Breast epithelium (tissue), 4 donors: ENCODE measurements at regions of chr18 and their contacts with region 1.

Region 1: GRCh38 chr18:61388010-61388409 is 54.8 kb downstream of the CDH20 start:
- DNase-seq: no peak
- H3K4me3 ChIP-seq: no peak overlapping the region
- H3K27ac ChIP-seq: no peak overlapping the region
- H3K4me1 ChIP-seq: no peaks in the 10 kb centered on the region
- H3K27me3 ChIP-seq: no peaks in the 10 kb centered on the region
- CTCF ChIP-seq: no peak
- POLR2A ChIP-seq: no peak

Region 2: DNA sequence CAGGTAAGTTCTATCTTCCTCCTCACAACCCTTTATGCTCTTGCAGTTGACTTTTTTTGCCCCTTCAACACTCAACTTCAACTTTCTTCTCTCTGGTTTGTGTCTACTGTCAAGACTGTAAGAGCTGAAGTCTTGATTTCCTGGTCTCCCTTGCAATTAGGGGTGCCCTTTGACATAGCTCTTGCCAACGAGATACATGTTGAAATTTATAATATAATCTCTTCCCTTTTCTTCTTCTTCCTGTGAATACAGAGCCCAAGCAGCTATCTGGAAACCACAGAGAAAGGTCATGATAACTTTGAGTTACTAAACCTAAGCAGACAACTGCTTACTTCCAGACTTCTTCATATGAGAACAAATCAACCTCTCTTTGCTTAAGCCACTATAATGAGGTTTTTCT is 1179.0 kb before region 1 on chr18:
- intact Hi-C with region 1: loop called (anchors 5 kb)
- DNase-seq: no peak
- H3K4me3 ChIP-seq: no peak overlapping the region
- H3K27ac ChIP-seq: no peak overlapping the region
- H3K4me1 ChIP-seq: no peaks in the 10 kb centered on the region
- H3K27me3 ChIP-seq: no peaks in the 10 kb centered on the region
- CTCF ChIP-seq: no peak
- POLR2A ChIP-seq: no peak

Region 3: GRCh38 chr18:61336766-61337165 is 51.2 kb before region 1 on chr18:
- intact Hi-C with region 1: no loop called
- DNase-seq: no peak
- H3K4me3 ChIP-seq: no peak overlapping the region
- H3K27ac ChIP-seq: no peak overlapping the region
- H3K4me1 ChIP-seq: peaks cover 0 to 5% of the 10 kb centered on the region in 2 donors
- H3K27me3 ChIP-seq: peaks cover 0 to 23% of the 10 kb centered on the region in 2 donors
- CTCF ChIP-seq: no peak
- POLR2A ChIP-seq: no peak